ENCODE measurements at regions of chr7 and their contacts with region 1.

Region 1: DNA sequence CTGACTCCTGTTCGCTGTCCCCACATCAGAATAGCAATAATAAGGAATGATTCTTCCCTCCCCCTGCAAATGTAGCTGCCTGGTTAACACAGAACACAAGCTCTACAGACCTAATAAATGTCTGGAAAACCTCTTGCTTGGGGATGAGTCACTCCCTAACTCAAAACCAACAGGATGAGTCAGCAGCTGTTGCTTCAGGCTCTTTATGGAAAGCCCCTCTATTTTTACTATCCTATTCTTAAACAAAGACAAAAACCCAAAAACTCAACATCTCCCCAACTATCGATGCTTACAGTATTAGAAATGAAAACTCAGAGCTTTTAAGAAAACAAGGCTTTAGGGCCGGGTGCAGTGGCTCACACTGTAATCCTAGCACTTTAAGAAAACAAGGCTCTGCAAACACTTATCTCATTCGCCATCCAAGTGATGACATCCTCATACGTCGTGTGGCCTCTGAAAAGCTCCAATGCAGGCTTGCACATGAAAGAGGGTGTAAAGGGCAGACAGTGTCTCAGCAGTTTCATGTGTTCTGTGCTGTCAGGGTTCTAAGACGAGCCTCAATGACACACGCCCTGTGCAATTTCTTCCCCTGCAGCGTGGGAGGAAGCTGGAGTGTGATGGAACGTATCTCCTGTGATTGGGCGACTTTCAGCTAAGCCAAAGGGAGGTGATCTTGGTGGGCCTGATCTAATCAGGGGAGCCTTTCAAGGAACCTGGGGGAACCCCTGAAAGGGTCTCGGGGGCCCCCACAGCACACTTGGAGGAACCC is 70.1 kb downstream of the AMZ1 start:
- DNase-seq: peak; percentile 91
- ATAC-seq: peak; percentile 96
- H3K4me3 Mint-ChIP-seq: peak overlapping the region; percentile 50
- H3K27ac Mint-ChIP-seq: peak overlapping the region; percentile 93
- H3K4me1 Mint-ChIP-seq: peaks cover 43% of the 10 kb centered on the region
- H3K27me3 Mint-ChIP-seq: no peaks in the 10 kb centered on the region

Region 2: DNA sequence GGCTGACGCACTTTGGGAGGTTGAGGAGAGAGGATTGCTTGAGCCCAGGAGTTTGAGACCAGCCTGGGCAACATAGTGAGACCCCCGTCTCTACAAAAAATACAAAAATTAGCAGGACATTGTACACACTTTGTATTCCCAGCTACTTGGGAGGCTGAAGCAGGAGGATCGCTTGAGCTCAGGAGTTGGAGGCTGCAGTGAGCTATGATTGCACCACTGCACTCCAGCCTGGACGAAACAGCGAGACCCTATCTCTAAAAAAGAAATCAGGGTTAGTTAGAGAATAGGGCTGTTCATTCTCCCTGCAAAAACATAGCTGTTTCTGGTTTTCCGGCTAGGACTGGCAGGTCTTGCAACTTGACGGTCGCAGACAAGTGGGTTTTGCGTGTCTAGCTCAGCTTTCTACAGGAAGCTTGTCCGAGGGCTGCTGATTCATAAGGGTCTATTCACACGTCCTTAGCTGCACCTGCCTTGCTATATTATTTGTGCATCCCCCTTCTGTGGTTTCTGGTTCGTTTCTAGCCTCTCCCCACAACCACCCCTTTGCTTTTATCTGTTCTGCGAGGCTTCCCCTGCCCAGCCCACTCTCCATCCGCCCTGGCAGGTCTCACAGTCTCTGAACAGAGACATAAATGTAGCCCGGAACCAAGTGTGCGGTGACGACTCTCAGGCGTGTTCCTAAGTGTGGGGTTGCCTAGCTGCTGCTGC is 59.4 kb before region 1 on chr7:
- CTCF ChIA-PET with region 1: no interaction called
- POLR2A ChIA-PET with region 1: no interaction called
- intact Hi-C with region 1: no loop called
- DNase-seq: peak; percentile 76
- ATAC-seq: peak; percentile 94
- H3K4me3 Mint-ChIP-seq: peak overlapping the region; percentile 47
- H3K27ac Mint-ChIP-seq: no peak overlapping the region
- H3K4me1 Mint-ChIP-seq: peaks cover 20% of the 10 kb centered on the region
- H3K27me3 Mint-ChIP-seq: no peaks in the 10 kb centered on the region

Region 3: DNA sequence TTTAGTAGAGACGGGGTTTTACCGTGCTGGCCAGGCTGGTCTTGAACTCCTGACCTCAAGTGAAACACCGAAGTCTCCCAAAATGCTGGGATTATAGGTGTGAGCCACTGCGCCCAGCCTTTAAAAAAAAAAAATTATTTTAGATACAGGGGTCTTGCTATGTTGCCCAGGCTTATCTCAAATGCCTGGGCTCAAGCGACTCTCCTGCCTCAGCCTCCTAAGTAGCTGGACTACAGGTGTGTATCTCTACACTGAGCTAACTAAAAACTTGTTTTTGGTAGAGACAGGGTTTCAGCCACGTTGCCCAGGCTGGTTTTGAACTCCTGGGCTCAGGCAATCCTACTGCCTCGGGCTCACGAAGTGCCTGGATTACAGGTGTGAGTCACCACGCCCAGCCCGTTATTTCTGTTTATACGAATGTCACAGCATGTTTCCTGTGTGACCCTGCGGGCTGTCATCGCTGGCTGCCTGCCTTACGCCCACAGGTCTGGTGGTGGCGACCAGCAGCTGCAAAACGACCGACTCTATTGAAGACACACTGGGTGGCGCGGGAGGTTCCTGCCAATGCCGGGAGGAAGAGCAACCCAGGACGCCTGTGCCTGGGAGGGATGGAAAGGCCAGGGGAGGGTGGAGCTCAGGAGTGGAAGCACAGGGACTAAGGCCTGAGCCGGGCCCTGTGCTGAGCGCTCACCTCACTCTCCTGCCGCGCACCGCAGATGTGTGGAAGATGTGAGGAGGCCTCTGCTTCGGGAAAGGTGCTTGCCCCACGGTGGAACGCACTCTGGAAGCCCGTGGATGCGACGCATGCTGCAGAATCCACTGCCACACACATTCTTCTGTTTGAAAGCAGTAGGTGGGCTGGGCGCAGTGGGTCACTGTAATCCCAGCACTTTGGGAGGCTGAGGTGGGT is 37.3 kb before region 1 on chr7:
- CTCF ChIA-PET with region 1: interaction called, 11 read pairs
- POLR2A ChIA-PET with region 1: interaction called, 5 read pairs
- intact Hi-C with region 1: loop called (anchors 1 to 2 kb)
- DNase-seq: peak; percentile 95
- ATAC-seq: peak; percentile 86
- H3K4me3 Mint-ChIP-seq: no peak overlapping the region
- H3K27ac Mint-ChIP-seq: peak overlapping the region; percentile 32
- H3K4me1 Mint-ChIP-seq: peaks cover 49% of the 10 kb centered on the region
- H3K27me3 Mint-ChIP-seq: no peaks in the 10 kb centered on the region

Region 4: GRCh38 chr7:2781636-2782035 is 23.5 kb after region 1 on chr7:
- CTCF ChIA-PET with region 1: interaction called, 15 read pairs
- POLR2A ChIA-PET with region 1: no interaction called
- intact Hi-C with region 1: loop called in 1 of 2 experiments (anchors 1 kb)
- DNase-seq: no peak
- ATAC-seq: no peak
- H3K4me3 Mint-ChIP-seq: no peak overlapping the region
- H3K27ac Mint-ChIP-seq: no peak overlapping the region
- H3K4me1 Mint-ChIP-seq: peaks cover 23% of the 10 kb centered on the region
- H3K27me3 Mint-ChIP-seq: no peaks in the 10 kb centered on the region

Region 5: DNA sequence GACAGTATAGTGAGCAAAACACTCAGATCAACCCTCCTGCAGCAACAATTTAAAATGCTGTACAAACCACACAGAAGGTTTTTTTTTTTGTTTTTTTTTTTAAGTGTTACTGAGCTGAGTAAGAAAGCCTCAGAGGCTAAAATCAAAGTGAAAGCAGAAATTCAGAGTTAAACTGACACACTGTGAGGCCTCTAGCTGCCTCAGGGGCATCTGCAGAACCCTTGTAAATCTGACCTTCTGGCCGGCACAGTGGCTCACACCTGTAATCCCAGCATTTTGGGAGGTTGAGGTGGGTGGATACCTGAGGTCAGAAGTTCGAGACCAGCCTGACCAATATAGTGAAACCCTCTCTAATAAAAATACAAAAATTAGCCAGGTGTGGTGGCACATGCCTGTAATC is 93.4 kb after region 1 on chr7:
- CTCF ChIA-PET with region 1: interaction called, 4 read pairs
- POLR2A ChIA-PET with region 1: no interaction called
- intact Hi-C with region 1: loop called in 1 of 2 experiments (anchors 1 kb)
- DNase-seq: peak; percentile 47
- ATAC-seq: peak; percentile 94
- H3K4me3 Mint-ChIP-seq: no peak overlapping the region
- H3K27ac Mint-ChIP-seq: peak overlapping the region; percentile 71
- H3K4me1 Mint-ChIP-seq: peaks cover 3% of the 10 kb centered on the region
- H3K27me3 Mint-ChIP-seq: no peaks in the 10 kb centered on the region

Region 6: DNA sequence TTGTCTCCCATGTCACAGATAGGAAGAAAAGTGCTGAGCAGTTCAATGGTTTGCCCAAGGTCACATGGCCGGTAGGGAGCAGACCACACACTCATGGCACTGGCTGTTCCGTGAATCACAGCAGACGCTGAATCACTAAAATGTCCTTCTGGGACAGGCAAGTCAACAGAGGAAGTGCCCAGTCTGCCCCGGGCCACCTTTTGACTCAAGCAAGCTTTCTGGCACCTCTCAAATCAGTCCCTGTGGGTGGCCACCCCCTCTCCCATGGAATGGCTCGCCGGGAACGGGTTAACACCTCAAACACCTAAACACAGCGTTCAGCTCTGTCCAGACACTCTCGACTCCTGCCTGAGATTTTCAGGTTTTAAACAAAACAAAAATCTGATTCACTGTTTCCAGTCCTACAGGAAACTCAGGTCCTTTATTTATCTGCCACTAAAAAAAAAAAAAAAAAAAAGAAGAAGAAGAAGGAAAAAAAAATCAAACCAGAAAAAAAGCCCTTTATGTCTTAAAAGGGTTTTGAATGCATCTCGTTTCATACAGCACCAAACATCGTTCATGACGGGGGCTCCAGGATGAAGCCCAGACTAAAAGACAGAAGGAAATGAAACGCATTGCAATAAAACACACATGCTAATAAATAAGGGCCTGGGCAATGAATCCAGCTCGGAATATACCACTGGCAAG is 270.1 kb after region 1 on chr7:
- CTCF ChIA-PET with region 1: no interaction called
- POLR2A ChIA-PET with region 1: no interaction called
- intact Hi-C with region 1: loop called in 1 of 2 experiments (anchors 2 kb)
- DNase-seq: peak; percentile 84
- ATAC-seq: peak; percentile 95
- H3K4me3 Mint-ChIP-seq: peak overlapping the region; percentile 47
- H3K27ac Mint-ChIP-seq: peak overlapping the region; percentile 84
- H3K4me1 Mint-ChIP-seq: peaks cover 51% of the 10 kb centered on the region
- H3K27me3 Mint-ChIP-seq: no peaks in the 10 kb centered on the region

Region 7: GRCh38 chr7:3461923-3462322 is 703.8 kb after region 1 on chr7:
- CTCF ChIA-PET with region 1: no interaction called
- POLR2A ChIA-PET with region 1: no interaction called
- intact Hi-C with region 1: loop called in 1 of 2 experiments (anchors 10 kb)
- DNase-seq: peak; percentile 85
- ATAC-seq: peak; percentile 93
- H3K4me3 Mint-ChIP-seq: peak overlapping the region; percentile 65
- H3K27ac Mint-ChIP-seq: peak overlapping the region; percentile 87
- H3K4me1 Mint-ChIP-seq: peaks cover 59% of the 10 kb centered on the region
- H3K27me3 Mint-ChIP-seq: no peaks in the 10 kb centered on the region

Measured in activated CD4-positive, alpha-beta T cell treated with anti-CD3 and anti-CD28 coated beads for 36 hours (primary cell).